K562 (cell line): ENCODE measurements at regions of chr1 and their contacts with region 1.

Region 1: GRCh38 chr1:22350171-22350909 is 101.3 kb upstream of the ZBTB40 start:
- DNase-seq: no peak
- ATAC-seq: no peak
- H3K4me3 ChIP-seq: no peak overlapping the region
- H3K27ac ChIP-seq: no peak overlapping the region
- H3K4me1 ChIP-seq: no peaks in the 10 kb centered on the region
- H3K27me3 ChIP-seq: peaks cover 56 to 58% of the 10 kb centered on the region in 2 experiments
- CTCF ChIP-seq: no peak
- EP300 ChIP-seq: no peak
- POLR2A ChIP-seq: no peak
- RAD21 ChIP-seq: no peak

Region 2: GRCh38 chr1:22328331-22329152 is 21.8 kb before region 1 on chr1:
- CTCF ChIA-PET with region 1: no interaction called
- POLR2A ChIA-PET with region 1: no interaction called
- in situ Hi-C with region 1: no loop called
- intact Hi-C with region 1: no loop called
- DNase-seq: no peak
- ATAC-seq: no peak; the same call in 2 of the 3 replicates
- H3K4me3 ChIP-seq: no peak overlapping the region
- H3K27ac ChIP-seq: no peak overlapping the region
- H3K4me1 ChIP-seq: peaks cover 0 to 5% of the 10 kb centered on the region in 2 experiments; a peak in 2 of 5 replicates
- H3K27me3 ChIP-seq: peaks cover 12 to 80% of the 10 kb centered on the region in 2 experiments; a peak in 3 of 5 replicates
- CTCF ChIP-seq: no peak
- EP300 ChIP-seq: no peak
- POLR2A ChIP-seq: no peak
- RAD21 ChIP-seq: no peak

Region 3: GRCh38 chr1:22362626-22363402 is 12.5 kb after region 1 on chr1:
- CTCF ChIA-PET with region 1: no interaction called
- POLR2A ChIA-PET with region 1: interaction called, 18 read pairs
- in situ Hi-C with region 1: no loop called
- intact Hi-C with region 1: no loop called
- DNase-seq: peak; percentile 76 to 90 (median 84)
- ATAC-seq: peak; percentile 79
- H3K4me3 ChIP-seq: no peak overlapping the region
- H3K27ac ChIP-seq: no peak overlapping the region; the same call in 2 of the 3 replicates
- H3K4me1 ChIP-seq: peaks cover 11 to 22% of the 10 kb centered on the region in 2 experiments; a peak in 4 of 5 replicates
- H3K27me3 ChIP-seq: peaks cover 24 to 48% of the 10 kb centered on the region in 2 experiments
- CTCF ChIP-seq: no peak
- EP300 ChIP-seq: no peak
- POLR2A ChIP-seq: no peak
- RAD21 ChIP-seq: no peak